Thyroid gland (tissue), 4 donors: ENCODE measurements at regions of chr21 and their contacts with region 1.

Region 1: DNA sequence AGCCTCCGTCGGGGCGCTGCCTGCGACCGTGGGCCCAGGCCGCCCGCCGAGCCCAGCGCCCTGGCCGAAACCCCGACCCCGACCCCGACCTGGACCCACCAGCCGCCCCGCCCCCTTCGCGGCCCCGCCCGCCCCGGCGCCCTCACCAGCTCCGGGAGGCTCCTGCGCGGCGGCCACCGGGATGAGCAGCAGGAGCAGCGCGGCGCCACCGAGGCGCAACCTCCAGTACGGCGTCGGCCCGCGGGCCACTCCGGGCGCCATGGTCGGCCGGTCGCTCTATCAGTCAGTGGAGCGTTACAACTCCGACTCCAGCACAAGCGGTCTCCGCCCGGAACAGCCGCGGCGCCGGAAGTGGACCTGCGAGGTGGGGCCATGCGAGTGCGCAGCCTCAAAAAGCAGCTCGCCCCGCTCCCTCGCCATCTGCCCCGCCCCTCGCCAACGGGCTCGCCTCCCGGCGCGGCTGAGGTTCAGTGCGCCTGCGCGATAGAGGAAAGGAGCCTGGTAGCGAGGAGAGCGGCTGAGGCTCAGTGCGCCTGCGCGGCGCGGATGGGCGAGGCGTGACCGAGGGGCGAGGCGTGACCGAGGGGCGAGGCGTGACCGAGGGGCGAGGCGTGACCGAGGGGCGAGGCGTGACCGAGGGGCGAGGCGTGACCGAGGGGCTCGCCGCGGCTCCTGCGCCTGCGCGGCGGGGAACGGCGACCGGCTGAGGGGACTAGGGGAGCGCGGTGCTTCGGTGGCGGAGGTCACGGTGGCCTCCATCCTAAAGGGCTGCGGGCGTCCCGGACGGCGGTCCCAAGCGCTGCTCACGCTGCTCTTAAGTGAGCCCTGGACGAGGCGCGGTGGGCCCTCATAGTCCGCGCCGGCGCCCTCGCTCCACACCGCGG is at the start of gene PTTG1IP:
- DNase-seq: peak; percentile 98 to 99
- H3K4me3 ChIP-seq: peak within 1 kb of the TSS; percentile 53 to 79 (median 78)
- H3K27ac ChIP-seq: peak within 1 kb of the TSS; percentile 95 to 97 (median 96)
- H3K4me1 ChIP-seq: peaks cover 48 to 51% of the 10 kb centered on the region in 2 donors
- H3K27me3 ChIP-seq: no peaks in the 10 kb centered on the region
- CTCF ChIP-seq: peak in 1 of 6 experiments; percentile 27
- POLR2A ChIP-seq: peak; percentile 69 to 88
- total RNA-seq, gene PTTG1IP: 256 to 374 (median 309) TPM

Region 2: GRCh38 chr21:44801468-44802395 is 71.9 kb before region 1 on chr21 and contains the start of gene UBE2G2:
- intact Hi-C with region 1: loop called (anchors 5 kb)
- DNase-seq: peak; percentile 73 to 75
- H3K4me3 ChIP-seq: peak within 1 kb of the TSS; percentile 36 to 90 (median 81)
- H3K27ac ChIP-seq: peak within 1 kb of the TSS; percentile 11 to 62 (median 58)
- H3K4me1 ChIP-seq: peaks cover 28 to 36% of the 10 kb centered on the region in 2 donors
- H3K27me3 ChIP-seq: no peaks in the 10 kb centered on the region
- CTCF ChIP-seq: no peak
- POLR2A ChIP-seq: peak in 1 of 2 donors; percentile 75
- total RNA-seq, gene UBE2G2: 90.4 to 127 (median 95.3) TPM

Region 3: GRCh38 chr21:44817506-44817880 is 56.1 kb before region 1 on chr21:
- intact Hi-C with region 1: loop called (anchors 5 kb)
- DNase-seq: peak; percentile 84 to 86
- H3K4me3 ChIP-seq: peak overlapping the region; percentile 35 to 87 (median 39)
- H3K27ac ChIP-seq: peak overlapping the region in 2 of 3 donors; percentile 61 to 71
- H3K4me1 ChIP-seq: peaks cover 19 to 46% of the 10 kb centered on the region in 2 donors
- H3K27me3 ChIP-seq: no peaks in the 10 kb centered on the region
- CTCF ChIP-seq: no peak
- POLR2A ChIP-seq: no peak